ENCODE measurements at regions of chr9 and their contacts with region 1.

Region 1: GRCh38 chr9:76445976-76446375 is 13.0 kb upstream of the GCNT1 start:
- DNase-seq: no peak
- H3K4me3 ChIP-seq: no peak overlapping the region
- H3K27ac ChIP-seq: no peak overlapping the region
- H3K27me3 ChIP-seq: no peaks in the 10 kb centered on the region
- CTCF ChIP-seq: no peak

Region 2: DNA sequence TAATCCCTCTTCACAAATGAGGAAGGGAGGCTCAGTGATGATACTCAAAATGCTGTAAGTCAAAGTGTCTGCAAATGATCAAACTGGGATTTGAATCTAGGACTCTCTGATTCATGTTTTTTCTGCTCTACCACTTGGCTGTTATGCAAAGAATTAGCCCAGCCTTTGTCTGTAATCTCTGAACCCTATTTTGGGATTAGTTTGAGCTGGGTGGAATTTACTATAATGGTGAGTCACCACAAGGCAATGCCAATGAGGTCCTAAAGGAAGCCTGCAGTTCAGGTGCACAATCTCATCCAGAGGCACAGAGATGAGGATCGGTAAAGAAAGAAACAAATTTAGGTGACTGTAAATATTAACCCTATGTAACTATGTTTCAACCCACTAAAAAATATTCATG is 80.9 kb before region 1 on chr9:
- intact Hi-C with region 1: no loop called
- DNase-seq: no peak
- H3K4me3 ChIP-seq: no peak overlapping the region
- H3K27ac ChIP-seq: no peak overlapping the region
- H3K27me3 ChIP-seq: no peaks in the 10 kb centered on the region
- CTCF ChIP-seq: no peak

Region 3: GRCh38 chr9:77149879-77150278 is 703.9 kb after region 1 on chr9:
- intact Hi-C with region 1: loop called in 1 of 2 experiments (anchors 2 kb)
- DNase-seq: no peak
- H3K4me3 ChIP-seq: no peak overlapping the region
- H3K27ac ChIP-seq: no peak overlapping the region
- H3K27me3 ChIP-seq: peaks cover 0 to 7% (median 0%) of the 10 kb centered on the region in 45 donors
- CTCF ChIP-seq: no peak

Measured in dorsolateral prefrontal cortex (tissue), 120 donors.